A673 (cell line): ENCODE measurements at regions of chr14 and their contacts with region 1.

Region 1: DNA sequence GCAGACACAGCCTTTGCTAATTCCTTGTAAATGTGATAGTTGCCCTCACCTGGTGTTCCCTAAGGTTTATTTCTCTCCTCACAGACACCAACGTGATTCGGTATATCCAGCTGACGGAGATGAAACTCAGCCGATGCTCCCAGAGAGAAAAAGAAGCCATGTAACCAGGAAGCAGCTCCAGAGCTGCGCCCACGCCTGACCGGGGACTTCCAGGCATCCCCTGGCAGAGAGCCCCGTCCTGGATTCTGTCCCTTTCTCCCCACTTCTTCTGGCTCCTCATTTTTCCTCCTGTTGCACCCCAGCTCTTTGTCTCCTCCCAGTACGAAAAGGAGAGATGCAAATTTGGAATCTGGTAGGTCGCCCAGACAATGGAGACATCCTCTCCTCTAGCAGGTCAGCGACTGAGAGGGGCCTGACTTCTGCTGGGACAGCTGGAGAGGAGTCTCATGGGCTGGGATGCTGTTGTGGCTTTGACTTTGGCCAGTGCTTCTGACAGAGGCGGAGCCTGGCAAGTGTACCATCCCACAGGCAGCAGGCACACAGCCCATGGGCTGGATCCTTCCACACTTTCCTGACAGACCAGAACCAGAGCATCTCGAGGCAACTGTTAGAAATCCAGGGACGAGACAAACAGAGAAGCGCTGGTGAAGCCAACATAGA is 29.4 kb downstream of the TTC9 start:
- DNase-seq: no peak
- H3K4me3 ChIP-seq: no peak overlapping the region
- H3K27ac ChIP-seq: no peak overlapping the region
- H3K4me1 ChIP-seq: peaks cover 4% of the 10 kb centered on the region
- H3K27me3 ChIP-seq: no peaks in the 10 kb centered on the region
- CTCF ChIP-seq: no peak

Region 2: DNA sequence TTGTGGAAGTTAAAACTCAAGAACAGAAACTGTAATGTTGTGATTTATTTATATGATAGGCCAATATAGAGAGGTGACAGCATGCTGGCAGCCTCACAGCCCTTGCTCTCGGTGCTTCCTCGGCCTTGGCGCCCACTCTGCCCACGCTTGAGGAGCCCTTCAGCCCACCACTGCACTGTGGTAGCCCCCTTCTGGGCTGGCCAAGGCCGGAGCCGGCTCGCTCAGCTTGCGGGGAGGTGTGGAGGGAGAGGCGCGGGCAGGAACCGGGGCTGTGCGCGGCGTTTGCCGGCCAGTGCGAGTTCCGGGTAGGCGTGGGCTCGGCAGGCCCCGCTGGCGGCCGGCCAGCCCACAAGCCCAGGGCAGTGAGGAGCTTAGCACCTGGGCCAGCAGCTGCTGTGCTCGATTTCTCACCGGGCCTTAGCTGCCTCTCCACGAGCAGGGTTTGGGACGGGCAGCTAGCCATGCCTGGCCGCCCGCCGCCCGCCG is 416.6 kb before region 1 on chr14:
- CTCF ChIA-PET with region 1: no interaction called
- POLR2A ChIA-PET with region 1: no interaction called
- intact Hi-C with region 1: no loop called
- DNase-seq: peak; percentile 29
- H3K4me3 ChIP-seq: peak overlapping the region; percentile 37
- H3K27ac ChIP-seq: no peak overlapping the region
- H3K4me1 ChIP-seq: no peaks in the 10 kb centered on the region
- H3K27me3 ChIP-seq: peaks cover 62% of the 10 kb centered on the region
- CTCF ChIP-seq: no peak

Region 3: GRCh38 chr14:71834284-71835204 is 1163.4 kb after region 1 on chr14:
- CTCF ChIA-PET with region 1: no interaction called
- POLR2A ChIA-PET with region 1: interaction called, 14 read pairs
- intact Hi-C with region 1: no loop called
- DNase-seq: no peak
- H3K4me3 ChIP-seq: no peak overlapping the region
- H3K27ac ChIP-seq: no peak overlapping the region
- H3K4me1 ChIP-seq: no peaks in the 10 kb centered on the region
- H3K27me3 ChIP-seq: no peaks in the 10 kb centered on the region
- CTCF ChIP-seq: no peak